ENCODE measurements at regions of chr19 and their contacts with region 1.

Region 1: GRCh38 chr19:43662487-43662886 is 7.5 kb downstream of the PLAUR start:
- H3K4me3 ChIP-seq: no peak overlapping the region
- H3K27ac ChIP-seq: no peak overlapping the region
- H3K4me1 ChIP-seq: peaks cover 1% of the 10 kb centered on the region
- CTCF ChIP-seq: peak; percentile 72

Region 2: DNA sequence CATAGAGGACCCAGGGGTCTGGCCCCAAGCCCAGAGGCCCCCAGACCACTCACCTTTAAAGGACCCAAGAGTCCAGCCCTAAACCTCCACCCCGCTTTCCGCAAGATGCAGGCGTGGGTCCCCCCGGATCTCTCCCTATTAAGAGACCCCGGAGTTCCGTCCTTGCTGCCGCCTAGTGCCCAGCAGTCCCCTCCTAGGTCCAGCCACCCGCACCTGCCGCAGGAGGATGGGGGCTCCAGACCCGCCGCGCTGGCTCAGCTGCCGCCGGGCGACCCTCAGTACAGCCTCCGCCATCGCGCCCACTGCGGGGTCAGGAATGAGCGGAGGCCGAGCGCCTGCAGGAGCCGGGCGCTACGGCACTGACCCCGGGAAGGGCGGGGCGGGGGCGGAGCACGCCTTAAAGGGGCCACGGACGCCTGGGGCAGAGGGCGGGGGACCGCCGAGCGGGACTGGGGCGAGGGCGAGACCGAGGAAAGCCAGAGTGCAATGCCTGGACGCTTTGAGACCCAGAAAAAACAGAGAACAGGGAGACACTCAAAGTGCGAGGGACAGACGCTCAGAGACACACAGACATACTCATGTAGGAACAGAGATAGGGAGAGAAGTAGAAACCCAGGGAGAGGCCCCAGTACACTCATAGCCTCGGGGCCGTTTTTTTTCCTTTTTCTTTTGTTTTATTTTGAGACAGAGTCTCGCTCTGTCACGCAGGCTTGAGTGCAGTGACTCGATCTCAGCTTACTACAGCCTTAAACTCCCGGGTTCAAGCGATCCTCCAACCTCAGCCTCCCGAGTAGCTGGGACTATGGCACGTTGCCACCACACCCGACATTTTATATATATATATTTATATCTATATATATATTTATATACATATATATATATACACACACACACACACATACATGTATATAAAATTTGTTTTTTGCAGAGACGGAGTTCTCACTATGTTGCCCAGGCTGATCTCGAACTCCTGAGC is 135.3 kb before region 1 on chr19 and contains the start of gene ETHE1:
- CTCF ChIA-PET with region 1: interaction called, 14 read pairs
- POLR2A ChIA-PET with region 1: no interaction called
- H3K4me3 ChIP-seq: peak within 1 kb of the TSS; percentile 60
- H3K27ac ChIP-seq: peak within 1 kb of the TSS; percentile 64; the same call in 1 of the 2 replicates
- H3K4me1 ChIP-seq: peaks cover 30% of the 10 kb centered on the region
- CTCF ChIP-seq: peak; percentile 79

Measured in HEK293 (cell line).